GM10248 (cell line): ENCODE measurements at regions of chr1 and their contacts with region 1.

Region 1: GRCh38 chr1:59276439-59276851 is 20.4 kb upstream of the FGGY start:
- DNase-seq: no peak
- CTCF ChIP-seq: no peak

Region 2: DNA sequence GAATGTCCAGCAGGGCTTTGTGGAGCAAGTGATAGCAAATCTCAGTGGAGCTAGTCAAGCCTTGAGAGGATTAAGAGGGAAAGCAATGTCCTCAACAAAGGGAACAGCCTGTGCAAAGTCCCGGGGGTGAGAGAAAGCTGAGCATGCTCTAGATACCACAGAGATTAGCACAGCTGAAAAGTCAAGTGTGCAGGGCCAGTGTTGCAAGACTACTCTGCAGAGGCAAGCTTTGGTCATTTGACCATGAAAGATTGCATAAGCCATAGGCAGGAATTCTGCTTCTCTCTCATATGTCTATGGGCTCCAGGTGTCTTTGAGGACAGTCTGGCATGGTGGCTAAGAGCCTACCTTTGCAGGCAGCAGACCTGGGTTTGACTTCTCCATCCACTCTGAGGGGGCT is 311.6 kb before region 1 on chr1:
- CTCF ChIA-PET with region 1: no interaction called
- POLR2A ChIA-PET with region 1: no interaction called
- DNase-seq: no peak
- CTCF ChIP-seq: no peak

Region 3: DNA sequence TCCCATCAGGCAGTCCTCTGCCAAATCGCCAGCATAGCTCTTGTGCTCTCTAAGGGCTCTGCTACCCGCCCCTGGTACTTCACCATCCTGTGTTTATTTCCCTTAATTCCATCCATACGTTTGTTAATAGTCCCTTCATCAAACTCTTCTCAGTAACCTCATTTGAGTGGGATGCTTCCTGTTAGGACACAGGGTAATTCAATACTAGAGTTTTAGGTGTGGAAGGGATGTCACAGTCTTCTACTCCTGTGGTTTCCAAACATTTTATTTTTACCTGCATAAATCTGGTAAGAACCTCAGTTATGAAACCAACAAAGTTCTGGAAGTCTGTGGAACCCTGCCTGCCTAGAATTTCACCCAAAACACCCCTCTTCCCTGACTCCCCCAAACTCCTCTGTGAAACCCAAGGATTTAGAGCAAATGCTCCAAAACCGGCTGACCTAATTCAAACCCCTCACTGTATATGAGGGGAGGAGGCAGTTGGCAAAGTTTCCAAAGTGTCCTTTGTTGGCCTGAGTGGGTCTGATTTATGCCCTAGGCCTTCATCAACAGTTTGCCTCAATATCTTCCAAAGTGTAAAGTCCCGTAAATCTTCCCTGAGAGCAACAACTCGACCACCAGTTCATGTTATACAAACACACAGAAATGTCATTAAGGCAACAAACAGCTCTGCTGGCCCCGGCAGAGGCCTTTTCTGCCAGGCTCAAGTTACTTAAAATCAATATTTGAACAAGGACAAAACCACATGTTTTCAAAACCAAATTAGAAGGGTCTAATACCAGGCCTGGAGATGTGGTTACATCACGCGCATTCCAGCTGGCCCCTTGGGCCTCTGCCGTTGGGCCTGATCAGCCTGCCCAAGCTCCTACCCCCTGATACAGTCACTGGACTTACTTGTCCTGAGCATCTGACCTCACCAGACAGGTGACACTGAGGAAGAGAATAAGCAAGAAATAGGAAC is 61.9 kb before region 1 on chr1:
- CTCF ChIA-PET with region 1: no interaction called
- POLR2A ChIA-PET with region 1: no interaction called
- DNase-seq: no peak
- CTCF ChIP-seq: no peak

Region 4: GRCh38 chr1:59249396-59250137 is 26.9 kb before region 1 on chr1:
- CTCF ChIA-PET with region 1: no interaction called
- POLR2A ChIA-PET with region 1: no interaction called
- DNase-seq: no peak
- CTCF ChIP-seq: no peak

Region 5: DNA sequence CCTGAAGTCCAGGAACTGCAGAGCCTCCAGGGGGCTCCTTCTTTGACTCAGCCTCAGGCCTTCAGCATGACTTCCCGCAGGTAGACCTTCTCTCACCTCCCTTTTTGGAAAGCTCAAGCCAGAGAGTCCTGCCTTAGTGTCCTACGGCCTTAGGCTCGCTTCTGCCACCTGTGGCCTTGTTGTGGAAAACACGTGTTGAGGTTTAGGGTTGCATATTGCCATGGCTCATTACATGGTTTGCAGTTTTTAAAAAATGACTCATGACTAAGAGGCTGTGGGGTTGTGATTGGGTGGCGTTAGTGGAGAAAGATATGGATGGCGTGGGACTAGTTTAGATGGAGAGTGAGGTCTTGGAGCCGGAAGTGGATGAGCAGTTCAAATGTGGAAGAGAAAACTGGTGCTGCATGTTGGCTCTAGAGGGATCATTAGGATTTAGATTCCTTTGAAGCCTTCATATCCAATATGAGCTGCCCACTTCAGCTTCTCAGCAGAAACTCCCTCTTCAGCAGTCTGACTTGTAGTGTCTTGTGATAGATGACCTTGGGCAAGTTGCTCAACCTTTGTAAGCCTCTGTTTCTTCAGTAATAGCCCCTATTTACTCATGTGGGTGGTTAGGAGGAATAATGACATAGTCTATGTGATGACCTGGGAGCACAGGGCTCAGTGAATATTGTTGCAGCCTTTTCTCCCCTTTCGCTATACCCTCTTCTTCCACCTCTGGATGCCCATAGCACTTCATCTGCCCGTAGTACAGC is 13.9 kb after region 1 on chr1:
- CTCF ChIA-PET with region 1: interaction called, 26 read pairs
- POLR2A ChIA-PET with region 1: no interaction called
- DNase-seq: peak; percentile 58
- CTCF ChIP-seq: peak; percentile 54